Panc1 (cell line): ENCODE measurements at regions of chr16 and their contacts with region 1.

Region 1: DNA sequence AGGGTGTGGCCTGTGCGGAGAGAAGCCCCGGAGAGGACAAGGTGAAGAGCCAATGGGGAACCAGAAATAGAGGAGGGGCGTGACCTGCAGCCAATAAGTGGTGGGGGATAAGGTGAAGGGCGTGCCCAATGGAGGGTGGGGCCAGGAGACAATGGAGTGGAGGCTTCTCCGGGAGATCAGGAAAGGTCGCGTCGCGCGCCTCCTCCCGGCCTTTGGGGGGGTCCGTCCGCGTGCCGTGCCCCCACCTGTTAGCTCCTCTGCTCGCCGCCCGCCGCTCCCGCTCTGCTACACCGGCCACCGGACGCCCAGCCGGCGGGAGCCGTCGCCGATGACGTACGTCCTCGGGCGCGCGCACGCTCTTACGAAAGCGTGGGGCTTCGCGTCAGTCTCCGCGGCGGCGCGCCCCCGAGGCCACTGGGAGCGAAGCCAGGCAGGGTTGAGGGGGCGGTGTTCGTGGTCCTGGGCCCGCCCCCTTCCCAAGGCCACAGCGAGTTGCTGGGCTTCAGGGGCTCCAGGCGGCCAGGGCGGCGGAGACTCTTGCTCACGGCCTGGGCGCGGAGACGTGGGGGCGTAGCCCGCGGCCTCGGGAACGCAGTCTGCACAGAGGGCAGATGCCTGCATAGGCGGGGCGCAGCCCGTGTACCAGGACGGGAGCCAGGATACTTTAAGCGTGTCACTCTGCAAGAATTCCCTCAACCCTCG is at the start of gene MATCAP1:
- DNase-seq: peak; percentile 78
- ATAC-seq: peak; percentile 93
- H3K4me3 ChIP-seq: peak within 1 kb of the TSS; percentile 65 to 87
- H3K27ac ChIP-seq: peak within 1 kb of the TSS; percentile 77
- H3K4me1 ChIP-seq: peaks cover 8% of the 10 kb centered on the region
- H3K27me3 ChIP-seq: no peaks in the 10 kb centered on the region
- CTCF ChIP-seq: no peak
- total RNA-seq, gene MATCAP1: 13.9 TPM

Region 2: GRCh38 chr16:66416939-66417700 is 766.7 kb before region 1 on chr16:
- CTCF ChIA-PET with region 1: no interaction called
- POLR2A ChIA-PET with region 1: no interaction called
- in situ Hi-C with region 1: no loop called
- intact Hi-C with region 1: no loop called
- DNase-seq: no peak
- ATAC-seq: no peak
- H3K4me3 ChIP-seq: no peak overlapping the region
- H3K27ac ChIP-seq: no peak overlapping the region
- H3K4me1 ChIP-seq: no peaks in the 10 kb centered on the region
- H3K27me3 ChIP-seq: no peaks in the 10 kb centered on the region
- CTCF ChIP-seq: no peak

Region 3: DNA sequence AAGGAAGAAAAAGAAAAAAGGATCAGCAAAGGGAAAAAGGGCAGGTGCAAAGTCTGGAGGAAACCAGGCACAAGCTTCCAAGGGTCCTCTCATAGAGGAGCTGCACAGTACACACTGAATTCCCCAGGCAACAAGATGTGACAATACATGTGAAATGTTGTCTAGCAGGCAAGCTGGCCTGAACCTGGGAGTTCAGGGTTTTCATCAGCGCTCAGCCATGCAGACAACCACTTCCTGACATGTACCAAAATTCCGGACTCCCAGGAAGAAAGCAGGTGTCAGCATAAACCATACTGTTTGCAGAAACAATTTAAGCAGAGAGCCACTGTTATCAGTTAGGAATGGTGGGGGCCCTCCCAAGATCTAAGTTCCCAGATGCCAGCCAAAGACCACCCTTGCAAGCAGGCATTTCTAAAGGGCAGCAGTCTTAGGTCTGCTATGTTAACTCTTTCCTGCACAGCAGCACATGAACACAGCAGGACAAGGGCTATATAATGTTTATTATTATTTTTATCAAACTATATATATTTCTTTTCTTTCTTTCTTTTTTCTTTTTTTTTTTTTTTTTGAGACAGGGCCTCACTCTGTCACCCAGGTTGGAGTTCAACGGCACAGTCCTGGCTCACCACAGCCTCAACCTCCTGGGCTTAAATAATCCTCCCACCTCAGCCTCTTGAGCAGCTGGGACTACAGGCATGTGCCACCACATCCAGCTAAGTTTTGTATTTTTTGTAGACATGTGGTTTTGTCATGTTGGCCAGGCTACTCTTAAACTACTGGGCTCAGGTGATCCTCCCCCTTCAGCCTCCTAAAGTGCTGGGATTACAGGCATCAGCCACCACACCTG is 643.9 kb before region 1 on chr16:
- CTCF ChIA-PET with region 1: no interaction called
- POLR2A ChIA-PET with region 1: no interaction called
- in situ Hi-C with region 1: no loop called
- intact Hi-C with region 1: no loop called
- DNase-seq: no peak
- ATAC-seq: no peak
- H3K4me3 ChIP-seq: no peak overlapping the region
- H3K27ac ChIP-seq: no peak overlapping the region
- H3K4me1 ChIP-seq: no peaks in the 10 kb centered on the region
- H3K27me3 ChIP-seq: no peaks in the 10 kb centered on the region
- CTCF ChIP-seq: no peak

Region 4: DNA sequence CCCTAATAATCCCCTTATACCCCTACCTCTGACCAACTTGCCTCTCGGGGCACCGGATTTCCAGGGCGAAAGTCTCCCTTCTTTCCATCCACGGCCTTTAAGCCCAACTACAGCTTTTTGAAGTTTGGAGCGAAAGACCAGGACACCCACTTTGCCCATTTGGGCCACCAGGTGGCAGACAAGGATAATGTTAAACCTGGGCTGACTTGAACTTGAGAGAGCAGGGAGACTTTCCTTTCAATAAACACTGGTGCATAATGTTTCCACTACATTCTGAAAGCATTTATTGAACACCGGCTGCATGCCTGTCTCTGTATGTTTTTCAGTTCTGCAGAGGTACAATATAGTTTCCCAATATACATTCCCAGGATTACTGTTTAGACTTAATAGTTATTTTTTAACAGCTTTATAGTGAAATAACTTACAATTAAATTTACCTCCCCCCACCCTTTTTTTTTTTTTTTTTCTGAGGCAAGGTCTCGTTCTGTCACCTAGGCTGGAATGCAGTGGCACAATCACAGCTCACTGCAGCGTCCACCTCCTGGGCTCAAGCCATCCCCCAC is 229.6 kb before region 1 on chr16:
- CTCF ChIA-PET with region 1: no interaction called
- POLR2A ChIA-PET with region 1: no interaction called
- in situ Hi-C with region 1: no loop called
- intact Hi-C with region 1: loop called (anchors 10 kb)
- DNase-seq: no peak
- ATAC-seq: peak; percentile 92
- H3K4me3 ChIP-seq: no peak overlapping the region
- H3K27ac ChIP-seq: no peak overlapping the region
- H3K4me1 ChIP-seq: peaks cover 7% of the 10 kb centered on the region
- H3K27me3 ChIP-seq: no peaks in the 10 kb centered on the region
- CTCF ChIP-seq: peak; percentile 81

Region 5: DNA sequence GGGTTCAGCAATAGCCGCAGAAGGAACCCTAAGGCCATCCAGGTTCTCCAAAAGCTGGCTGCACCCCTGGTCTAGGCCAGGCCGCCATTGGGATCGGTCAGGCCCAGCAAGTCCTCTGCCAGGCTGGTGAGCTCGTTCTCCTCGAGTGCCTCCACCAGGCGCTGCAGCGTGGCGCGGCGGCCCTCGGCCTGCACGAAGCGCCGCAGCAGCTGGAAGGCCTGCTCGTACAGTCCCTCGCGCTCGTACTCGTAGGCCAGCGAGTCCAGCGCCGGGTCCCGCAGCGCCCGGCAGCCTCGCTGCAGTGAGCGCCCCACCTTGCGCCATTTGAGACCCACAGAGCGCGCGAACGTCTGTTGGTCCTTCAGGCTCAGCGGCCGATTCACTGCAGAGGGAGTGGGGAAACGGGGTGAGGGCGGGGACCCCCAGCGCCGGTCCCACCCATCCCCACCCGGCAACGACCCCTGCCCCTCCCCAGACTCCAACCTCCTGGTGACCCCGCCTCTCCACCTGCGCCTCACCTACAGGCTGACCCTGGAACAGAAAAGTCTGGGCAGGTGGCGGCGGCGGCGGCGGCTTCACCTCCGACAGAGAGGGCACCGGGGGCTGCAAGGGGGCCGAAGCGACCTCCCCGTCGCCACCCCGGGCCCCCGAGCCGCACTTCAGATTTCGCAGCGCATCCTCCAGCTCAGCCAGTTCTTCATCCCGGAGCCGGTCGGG is 29.0 kb before region 1 on chr16:
- CTCF ChIA-PET with region 1: no interaction called
- POLR2A ChIA-PET with region 1: no interaction called
- in situ Hi-C with region 1: no loop called
- intact Hi-C with region 1: no loop called
- DNase-seq: no peak
- ATAC-seq: no peak
- H3K4me3 ChIP-seq: no peak overlapping the region
- H3K27ac ChIP-seq: no peak overlapping the region
- H3K4me1 ChIP-seq: peaks cover 8% of the 10 kb centered on the region
- H3K27me3 ChIP-seq: no peaks in the 10 kb centered on the region
- CTCF ChIP-seq: 0 out of 2 replicates have a peak, but pooled peaks have one; percentile 47